H1 (cell line): ENCODE measurements at regions of chr1 and their contacts with region 1.

Region 1: DNA sequence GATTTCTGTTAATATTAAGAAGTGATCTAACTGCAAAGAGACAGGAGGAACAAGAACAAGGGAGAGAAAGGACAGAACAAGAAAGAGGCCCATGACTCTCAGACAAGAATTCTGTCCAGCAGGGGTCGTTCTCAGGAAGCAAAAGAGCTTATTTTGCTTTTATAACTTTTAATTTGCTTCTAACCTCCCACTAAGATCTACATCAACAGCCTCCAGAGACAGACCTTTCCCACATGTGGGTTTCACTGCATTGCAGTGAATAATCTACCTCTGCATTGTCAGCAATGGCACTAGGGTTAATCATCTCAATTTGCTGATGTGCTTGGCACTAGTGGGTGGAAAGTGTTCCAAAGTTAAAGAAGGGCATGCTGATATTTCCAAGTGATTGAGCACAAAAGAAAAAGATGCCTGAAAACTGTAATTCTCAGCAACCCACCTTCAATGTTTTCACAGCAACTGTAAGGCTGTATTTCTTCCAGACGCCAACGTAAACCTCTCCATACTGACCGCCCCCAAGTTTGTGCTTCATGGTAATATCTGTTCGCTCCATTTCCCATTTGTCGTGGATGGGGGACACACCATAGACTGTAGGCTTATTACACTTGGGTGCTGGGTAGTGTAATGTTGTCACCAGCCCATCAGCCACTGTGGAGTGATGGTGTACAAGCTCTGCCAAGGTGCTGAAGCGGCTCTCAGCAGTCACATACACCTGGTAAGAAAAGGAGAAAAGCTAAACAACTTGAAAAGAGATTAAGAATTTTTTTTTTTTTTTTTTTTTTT is 39.5 kb downstream of the TOR3A start:
- DNase-seq: peak in 1 of 2 experiments; percentile 55
- H3K4me3 ChIP-seq: no peak overlapping the region
- H3K27ac ChIP-seq: no peak overlapping the region
- H3K4me1 ChIP-seq: peaks cover 0 to 2% (median 0%) of the 10 kb centered on the region in 4 experiments; a peak in 2 of 7 replicates
- H3K27me3 ChIP-seq: no peaks in the 10 kb centered on the region
- CTCF ChIP-seq: peak in 2 of 3 experiments; percentile 51 to 53; a peak in 2 of 4 replicates
- EP300 ChIP-seq: no peak
- POLR2A ChIP-seq: no peak
- RAD21 ChIP-seq: peak; percentile 61 to 70

Region 2: DNA sequence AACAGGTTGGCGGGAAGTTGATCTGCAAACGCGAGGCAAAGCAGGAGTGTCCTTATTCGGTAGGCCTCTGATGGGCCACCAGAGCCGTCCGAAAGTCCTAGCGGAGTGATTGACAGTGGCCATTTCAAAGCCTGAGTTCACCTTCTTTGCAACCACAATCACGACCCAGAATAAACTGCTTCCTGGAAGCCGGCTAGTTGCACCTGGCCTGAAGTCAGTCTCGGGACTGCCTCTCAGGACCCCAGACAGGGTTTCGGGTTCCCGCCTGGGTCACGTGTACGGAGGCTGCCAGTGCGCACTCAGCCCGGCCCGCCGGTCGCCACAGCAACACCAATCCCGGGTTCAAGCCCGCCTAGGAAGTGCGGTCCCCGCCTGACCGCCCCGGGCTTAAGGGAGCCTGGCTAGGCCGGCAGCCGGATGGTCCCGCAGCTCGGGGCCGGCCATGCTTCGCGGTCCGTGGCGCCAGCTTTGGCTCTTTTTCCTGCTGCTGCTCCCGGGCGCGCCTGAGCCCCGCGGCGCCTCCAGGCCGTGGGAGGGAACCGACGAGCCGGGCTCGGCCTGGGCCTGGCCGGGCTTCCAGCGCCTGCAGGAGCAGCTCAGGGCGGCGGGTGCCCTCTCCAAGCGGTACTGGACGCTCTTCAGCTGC is 39.5 kb before region 1 on chr1 and contains the start of gene TOR3A:
- CTCF ChIA-PET with region 1: interaction called, 10 read pairs
- POLR2A ChIA-PET with region 1: interaction called, 9 read pairs
- DNase-seq: peak; percentile 79 to 93
- H3K4me3 ChIP-seq: peak within 1 kb of the TSS; percentile 55 to 74 (median 70)
- H3K27ac ChIP-seq: 0 out of 2 replicates have a peak within 1 kb of the TSS, but pooled peaks have one; percentile 35
- H3K4me1 ChIP-seq: peaks cover 0 to 11% (median 4%) of the 10 kb centered on the region in 4 experiments; a peak in 6 of 7 replicates
- H3K27me3 ChIP-seq: no peaks in the 10 kb centered on the region
- CTCF ChIP-seq: no peak
- EP300 ChIP-seq: peak in 1 of 2 experiments; percentile 32; a peak in 1 of 3 replicates
- POLR2A ChIP-seq: peak in 1 of 2 experiments; percentile 63; a peak in 2 of 3 replicates
- RAD21 ChIP-seq: no peak
- total RNA-seq, gene TOR3A: 19.9 and 21.4 TPM in 2 replicates

Region 3: DNA sequence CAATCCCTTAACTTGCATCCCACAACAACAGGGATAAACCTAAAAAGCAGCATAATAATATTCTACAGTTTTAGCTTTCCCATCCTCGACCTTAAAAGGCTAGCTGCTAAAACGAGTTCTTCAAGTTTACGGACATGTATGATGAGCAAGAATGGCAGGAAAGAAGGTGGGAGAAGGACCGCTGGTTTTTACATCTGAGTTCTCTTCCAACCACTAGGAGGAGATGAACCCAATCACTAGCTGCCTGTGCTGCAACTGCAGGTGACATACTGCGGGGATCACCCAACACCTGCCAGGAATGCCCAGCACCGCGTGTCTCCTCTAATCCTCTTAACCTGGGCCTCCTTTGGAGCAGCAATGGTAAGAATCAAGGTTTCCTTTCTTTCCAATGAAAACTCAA is 16.0 kb before region 1 on chr1:
- CTCF ChIA-PET with region 1: interaction called, 16 read pairs
- POLR2A ChIA-PET with region 1: no interaction called
- DNase-seq: peak in 1 of 2 experiments; percentile 50
- H3K4me3 ChIP-seq: no peak overlapping the region
- H3K27ac ChIP-seq: no peak overlapping the region
- H3K4me1 ChIP-seq: no peaks in the 10 kb centered on the region
- H3K27me3 ChIP-seq: no peaks in the 10 kb centered on the region
- CTCF ChIP-seq: peak; percentile 55 to 90 (median 84)
- EP300 ChIP-seq: no peak
- POLR2A ChIP-seq: no peak
- RAD21 ChIP-seq: peak; percentile 75 to 78

Region 4: DNA sequence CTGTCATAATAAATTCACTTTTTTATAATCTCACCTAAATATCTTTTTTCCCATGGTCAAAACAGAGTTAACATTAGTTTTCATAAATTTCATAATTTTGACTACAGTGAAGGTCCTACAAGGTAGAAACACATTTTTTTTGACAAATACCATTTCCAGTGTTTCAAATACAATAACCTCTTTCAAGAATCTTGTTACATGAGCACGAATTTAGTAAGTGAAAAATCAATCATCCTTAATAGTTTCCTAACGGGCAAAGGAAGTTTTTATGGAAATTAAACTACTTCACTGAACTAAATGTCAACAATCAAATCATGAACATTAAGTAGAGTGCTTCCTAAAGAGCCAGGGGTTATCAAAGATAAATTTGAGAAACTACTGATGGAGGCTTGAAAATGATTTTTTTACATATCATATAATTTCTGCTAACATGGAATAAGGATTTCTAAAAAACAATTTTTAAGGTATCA is 72.8 kb after region 1 on chr1:
- CTCF ChIA-PET with region 1: interaction called, 14 read pairs
- POLR2A ChIA-PET with region 1: no interaction called
- DNase-seq: no peak
- H3K4me3 ChIP-seq: no peak overlapping the region
- H3K27ac ChIP-seq: no peak overlapping the region
- H3K4me1 ChIP-seq: no peaks in the 10 kb centered on the region
- H3K27me3 ChIP-seq: no peaks in the 10 kb centered on the region
- CTCF ChIP-seq: no peak
- EP300 ChIP-seq: no peak
- POLR2A ChIP-seq: no peak
- RAD21 ChIP-seq: no peak

Region 5: GRCh38 chr1:179208681-179209477 is 87.5 kb after region 1 on chr1:
- CTCF ChIA-PET with region 1: interaction called, 10 read pairs
- POLR2A ChIA-PET with region 1: no interaction called
- DNase-seq: no peak
- H3K4me3 ChIP-seq: no peak overlapping the region
- H3K27ac ChIP-seq: no peak overlapping the region
- H3K4me1 ChIP-seq: no peaks in the 10 kb centered on the region
- H3K27me3 ChIP-seq: no peaks in the 10 kb centered on the region
- CTCF ChIP-seq: no peak
- EP300 ChIP-seq: no peak
- POLR2A ChIP-seq: no peak
- RAD21 ChIP-seq: no peak

Region 6: GRCh38 chr1:179365320-179366092 is 244.2 kb after region 1 on chr1 and contains the start of gene AXDND1:
- CTCF ChIA-PET with region 1: interaction called, 34 read pairs
- POLR2A ChIA-PET with region 1: no interaction called
- DNase-seq: peak; percentile 5 to 87
- H3K4me3 ChIP-seq: peak within 1 kb of the TSS; percentile 83 to 91 (median 87)
- H3K27ac ChIP-seq: peak within 1 kb of the TSS; percentile 86
- H3K4me1 ChIP-seq: no peaks in the 10 kb centered on the region
- H3K27me3 ChIP-seq: no peaks in the 10 kb centered on the region
- CTCF ChIP-seq: peak in 1 of 3 experiments; percentile 7; a peak in 1 of 4 replicates
- EP300 ChIP-seq: no peak
- POLR2A ChIP-seq: peak in 1 of 2 experiments; percentile 51; a peak in 1 of 3 replicates
- RAD21 ChIP-seq: no peak; a peak in 1 of 4 replicates
- total RNA-seq, gene AXDND1: 0.38 and 0.61 TPM in 2 replicates

Region 7: DNA sequence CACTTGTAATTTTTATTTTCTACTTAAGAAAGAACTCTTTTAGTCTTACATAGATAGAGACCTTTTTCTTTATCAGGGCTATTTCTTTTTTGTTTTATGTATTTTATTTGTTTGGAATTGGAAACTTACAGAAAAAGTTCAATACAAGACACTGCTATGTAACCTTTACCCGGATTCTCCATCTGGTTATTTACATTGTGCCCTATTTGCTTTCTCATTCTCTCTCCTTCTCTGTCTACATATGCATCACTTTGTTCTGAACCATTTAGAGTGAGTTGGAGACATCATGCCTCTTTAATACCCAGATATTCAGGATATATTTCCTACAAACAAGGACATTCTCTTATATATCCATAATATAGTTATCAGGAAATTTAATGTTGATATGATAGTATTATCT is 262.7 kb after region 1 on chr1:
- CTCF ChIA-PET with region 1: no interaction called
- POLR2A ChIA-PET with region 1: no interaction called
- DNase-seq: no peak
- H3K4me3 ChIP-seq: no peak overlapping the region
- H3K27ac ChIP-seq: no peak overlapping the region
- H3K4me1 ChIP-seq: no peaks in the 10 kb centered on the region
- H3K27me3 ChIP-seq: no peaks in the 10 kb centered on the region
- CTCF ChIP-seq: no peak
- EP300 ChIP-seq: no peak
- POLR2A ChIP-seq: no peak
- RAD21 ChIP-seq: no peak